ENCODE measurements at regions of chr19 and their contacts with region 1.

Region 1: DNA sequence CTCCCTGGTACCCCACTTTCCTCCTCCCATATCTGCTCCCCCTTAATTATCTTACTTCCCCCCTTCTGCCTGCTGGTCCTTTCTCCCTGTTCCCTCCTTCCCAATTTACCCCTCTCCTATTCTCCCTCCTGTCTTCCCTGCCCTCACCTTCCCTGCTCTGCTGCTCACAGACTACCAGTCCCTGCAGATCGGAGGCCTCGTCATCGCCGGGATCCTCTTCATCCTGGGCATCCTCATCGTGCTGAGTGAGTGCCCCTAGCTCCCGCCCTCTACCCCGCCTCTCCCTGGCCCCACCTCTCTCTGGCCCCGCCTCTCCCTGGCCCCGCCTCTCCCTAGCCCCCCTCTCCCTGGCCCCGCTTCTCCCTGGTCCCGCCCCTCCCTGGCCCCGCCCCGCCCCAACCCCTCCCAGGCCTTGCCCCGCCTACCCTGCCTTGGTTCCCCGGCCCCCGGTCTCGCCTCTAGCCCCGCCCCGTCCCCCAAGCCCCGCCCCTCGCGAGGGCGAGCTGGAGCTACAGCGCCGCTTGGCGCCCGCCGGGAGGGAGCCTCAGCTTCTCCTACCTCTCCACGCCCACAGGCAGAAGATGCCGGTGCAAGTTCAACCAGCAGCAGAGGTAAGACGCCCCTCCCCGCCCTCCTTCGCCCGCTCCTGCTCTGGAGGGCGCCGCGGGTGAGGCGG is 2.0 kb upstream of the FXYD7 start:
- DNase-seq: peak; percentile 77 to 95
- H3K4me3 ChIP-seq: no peak overlapping the region; the same call in 1 of the 2 replicates
- H3K27ac ChIP-seq: no peak overlapping the region
- H3K4me1 ChIP-seq: peaks cover 20% of the 10 kb centered on the region
- H3K27me3 ChIP-seq: no peaks in the 10 kb centered on the region
- CTCF ChIP-seq: peak; percentile 54; the same call in 1 of the 2 replicates

Region 2: GRCh38 chr19:34925278-34925855 is 215.7 kb before region 1 on chr19:
- CTCF ChIA-PET with region 1: interaction called, 10 read pairs
- POLR2A ChIA-PET with region 1: no interaction called
- intact Hi-C with region 1: no loop called
- DNase-seq: no peak
- H3K4me3 ChIP-seq: no peak overlapping the region
- H3K27ac ChIP-seq: no peak overlapping the region
- H3K4me1 ChIP-seq: no peaks in the 10 kb centered on the region; the same call in 1 of the 2 replicates
- H3K27me3 ChIP-seq: peaks cover 38% of the 10 kb centered on the region
- CTCF ChIP-seq: no peak

Region 3: DNA sequence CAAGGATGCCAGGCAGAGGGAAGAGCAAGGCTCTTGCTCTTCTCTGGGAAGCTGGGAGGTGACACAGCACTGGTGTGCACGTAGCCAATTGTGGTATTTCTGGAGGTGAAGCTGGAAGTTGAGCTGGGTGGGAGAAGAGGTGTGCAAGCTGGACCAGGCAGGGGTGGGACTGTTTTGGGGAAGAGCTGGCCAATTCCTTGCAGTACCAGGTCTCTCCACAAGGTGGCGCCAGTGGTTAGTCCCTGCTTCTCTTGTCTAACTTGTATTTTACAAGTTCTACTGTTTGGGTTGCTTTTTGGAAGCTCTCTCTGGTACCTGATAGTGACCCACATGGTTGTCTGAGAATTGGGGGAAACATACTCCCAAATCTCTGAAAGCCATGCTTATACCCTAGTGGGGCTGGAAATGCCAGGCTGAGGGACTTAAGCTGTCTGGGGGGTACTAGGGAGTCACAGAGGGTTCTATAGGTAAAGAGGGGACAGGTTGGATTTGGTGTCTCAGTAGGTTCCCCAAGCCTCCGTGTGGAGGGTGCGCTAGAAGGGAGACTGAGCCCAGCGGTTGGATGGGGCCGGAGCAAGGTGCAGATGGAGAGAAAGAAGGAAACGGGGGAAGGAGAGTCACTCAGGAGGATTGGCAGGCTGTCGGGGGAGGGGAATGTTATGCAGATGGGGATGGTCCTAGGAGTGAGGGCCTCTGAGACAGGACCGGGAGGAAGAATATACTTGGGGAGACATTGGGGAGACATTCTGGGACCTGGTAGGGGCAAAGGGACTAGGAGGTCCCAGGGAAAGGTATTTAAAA is 96.6 kb before region 1 on chr19:
- CTCF ChIA-PET with region 1: interaction called, 11 read pairs
- POLR2A ChIA-PET with region 1: no interaction called
- intact Hi-C with region 1: loop called (anchors 1 kb)
- DNase-seq: peak in 1 of 2 experiments; percentile 66
- H3K4me3 ChIP-seq: no peak overlapping the region
- H3K27ac ChIP-seq: no peak overlapping the region
- H3K4me1 ChIP-seq: peaks cover 8% of the 10 kb centered on the region; the same call in 1 of the 2 replicates
- H3K27me3 ChIP-seq: no peaks in the 10 kb centered on the region
- CTCF ChIP-seq: peak; percentile 99

Region 4: DNA sequence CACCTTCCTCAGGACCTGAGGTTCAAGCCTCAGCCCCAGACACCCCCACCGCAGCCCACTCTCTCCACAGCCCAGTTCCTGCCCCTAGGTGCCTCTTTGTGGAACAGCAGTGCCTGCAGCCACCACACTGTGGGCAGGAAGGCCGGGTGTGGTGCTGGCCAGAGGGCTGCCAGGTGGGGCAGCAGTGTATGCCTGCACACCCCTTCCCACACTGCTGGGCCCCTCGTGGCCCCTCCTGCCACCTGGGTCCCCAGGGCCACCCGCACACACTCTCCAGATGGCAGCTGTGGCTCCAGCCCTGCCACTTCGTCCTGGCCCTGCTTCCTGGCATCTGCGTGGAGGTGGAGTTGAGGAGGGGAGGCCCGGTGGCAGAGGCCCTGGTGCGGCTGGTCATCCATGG is 64.4 kb before region 1 on chr19:
- CTCF ChIA-PET with region 1: no interaction called
- POLR2A ChIA-PET with region 1: no interaction called
- intact Hi-C with region 1: no loop called
- DNase-seq: no peak
- H3K4me3 ChIP-seq: no peak overlapping the region
- H3K27ac ChIP-seq: no peak overlapping the region
- H3K4me1 ChIP-seq: no peaks in the 10 kb centered on the region
- H3K27me3 ChIP-seq: peaks cover 5% of the 10 kb centered on the region; the same call in 1 of the 2 replicates
- CTCF ChIP-seq: no peak

Region 5: DNA sequence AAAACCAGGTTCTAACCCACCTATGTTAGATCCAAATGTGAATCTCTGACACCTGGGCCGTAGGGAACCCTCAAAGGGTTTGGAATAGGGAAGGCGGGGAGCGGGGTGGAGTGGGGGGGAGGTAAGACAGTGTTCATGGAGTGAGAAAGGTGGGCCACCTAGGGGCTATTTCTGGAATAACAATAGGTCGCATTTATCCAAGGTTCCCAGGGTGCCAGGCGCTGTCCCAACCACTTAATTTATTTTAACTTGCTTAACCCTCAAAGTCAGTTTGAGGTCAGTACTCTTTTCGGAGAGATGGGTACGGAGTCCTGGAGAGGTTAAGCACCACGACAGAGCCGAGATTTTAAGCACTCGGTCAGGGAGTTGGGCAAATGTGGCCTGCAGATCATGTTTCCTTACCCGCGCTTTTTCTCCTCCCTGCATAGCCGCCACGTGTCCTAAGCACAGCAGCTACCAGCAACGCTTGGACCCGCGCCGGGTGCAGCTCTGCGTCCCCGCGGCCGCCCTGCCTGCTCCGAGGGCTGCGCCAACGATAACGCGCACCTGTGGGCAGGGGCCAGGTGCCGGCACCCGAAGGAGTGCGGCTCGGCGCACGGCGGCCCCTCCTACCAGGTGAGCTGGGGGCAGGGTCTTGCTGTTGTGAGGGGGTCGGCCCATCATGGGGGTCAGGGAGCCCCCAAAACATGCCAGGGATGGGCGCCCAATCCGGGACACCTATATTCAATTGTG is 50.4 kb before region 1 on chr19:
- CTCF ChIA-PET with region 1: interaction called, 9 read pairs
- POLR2A ChIA-PET with region 1: no interaction called
- intact Hi-C with region 1: loop called (anchors 2 kb)
- DNase-seq: peak in 1 of 2 experiments; percentile 50
- H3K4me3 ChIP-seq: peak overlapping the region; percentile 26; the same call in 1 of the 2 replicates
- H3K27ac ChIP-seq: no peak overlapping the region
- H3K4me1 ChIP-seq: 0 out of 2 replicates have a peak, but pooled peaks cover 4% of the 10 kb centered on the region
- H3K27me3 ChIP-seq: no peaks in the 10 kb centered on the region
- CTCF ChIP-seq: peak; percentile 82

Region 6: DNA sequence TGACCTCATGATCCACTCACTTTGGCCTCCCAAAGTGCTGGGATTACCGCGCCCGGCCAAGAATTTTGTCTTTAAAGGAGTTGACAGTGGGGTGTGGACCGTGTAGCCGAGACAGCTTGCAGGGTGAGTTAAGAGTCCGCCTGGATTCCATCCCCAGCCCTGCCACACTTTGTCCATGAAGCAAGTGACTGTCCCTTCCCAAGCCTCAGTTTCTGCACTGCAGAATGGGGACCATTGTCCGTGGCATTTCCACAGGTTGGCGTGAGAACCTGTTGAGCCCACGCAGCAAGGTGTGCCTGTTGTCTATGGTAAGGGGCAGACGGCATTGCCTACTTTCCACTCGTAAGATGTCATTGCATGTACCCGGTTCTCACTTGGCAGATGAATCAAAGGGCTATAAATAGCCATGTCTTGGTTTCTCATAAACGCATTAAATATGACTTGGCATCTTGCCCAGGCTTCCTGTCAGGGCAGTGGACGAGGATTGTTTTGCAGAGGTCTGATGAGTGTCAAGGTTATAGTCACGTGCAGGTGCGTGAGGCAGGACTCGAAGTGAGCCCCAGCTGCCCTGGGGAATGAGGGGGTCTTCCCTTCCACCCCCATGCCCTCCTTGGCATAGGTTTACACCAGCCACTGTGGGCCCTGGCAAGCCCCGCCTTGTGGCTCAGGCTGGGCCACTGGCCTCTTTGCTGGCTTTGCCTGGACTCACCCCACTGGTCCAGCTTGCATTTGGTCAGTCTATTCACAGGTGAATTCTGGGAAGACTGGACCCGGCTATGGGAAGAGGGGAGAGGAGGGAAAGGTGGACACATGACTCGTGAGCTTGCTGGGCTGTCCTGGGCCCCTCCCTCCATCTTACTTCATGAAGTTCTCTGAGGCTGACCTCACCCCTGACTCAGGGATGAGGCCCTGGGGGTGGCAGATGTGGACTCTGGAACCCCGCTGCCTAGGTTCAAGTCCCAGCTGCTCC is 72.8 kb after region 1 on chr19:
- CTCF ChIA-PET with region 1: no interaction called
- POLR2A ChIA-PET with region 1: no interaction called
- intact Hi-C with region 1: loop called (anchors 2 kb)
- DNase-seq: peak; percentile 72 to 88
- H3K4me3 ChIP-seq: peak overlapping the region; percentile 21; the same call in 1 of the 2 replicates
- H3K27ac ChIP-seq: peak overlapping the region; percentile 84
- H3K4me1 ChIP-seq: peaks cover 34% of the 10 kb centered on the region
- H3K27me3 ChIP-seq: no peaks in the 10 kb centered on the region
- CTCF ChIP-seq: no peak

Region 7: GRCh38 chr19:35279985-35280821 is 139.1 kb after region 1 on chr19:
- CTCF ChIA-PET with region 1: no interaction called
- POLR2A ChIA-PET with region 1: no interaction called
- intact Hi-C with region 1: no loop called
- DNase-seq: no peak
- H3K4me3 ChIP-seq: no peak overlapping the region
- H3K27ac ChIP-seq: no peak overlapping the region
- H3K4me1 ChIP-seq: no peaks in the 10 kb centered on the region
- H3K27me3 ChIP-seq: no peaks in the 10 kb centered on the region
- CTCF ChIP-seq: no peak

Region 8: GRCh38 chr19:35352448-35353304 is 211.6 kb after region 1 on chr19:
- CTCF ChIA-PET with region 1: no interaction called
- POLR2A ChIA-PET with region 1: no interaction called
- intact Hi-C with region 1: loop called (anchors 10 kb)
- DNase-seq: peak; percentile 66 to 71
- H3K4me3 ChIP-seq: no peak overlapping the region
- H3K27ac ChIP-seq: no peak overlapping the region
- H3K4me1 ChIP-seq: no peaks in the 10 kb centered on the region
- H3K27me3 ChIP-seq: no peaks in the 10 kb centered on the region
- CTCF ChIP-seq: peak; percentile 93